Body of pancreas (tissue), 4 donors: ENCODE measurements at regions of chr6 and their contacts with region 1.

Region 1: DNA sequence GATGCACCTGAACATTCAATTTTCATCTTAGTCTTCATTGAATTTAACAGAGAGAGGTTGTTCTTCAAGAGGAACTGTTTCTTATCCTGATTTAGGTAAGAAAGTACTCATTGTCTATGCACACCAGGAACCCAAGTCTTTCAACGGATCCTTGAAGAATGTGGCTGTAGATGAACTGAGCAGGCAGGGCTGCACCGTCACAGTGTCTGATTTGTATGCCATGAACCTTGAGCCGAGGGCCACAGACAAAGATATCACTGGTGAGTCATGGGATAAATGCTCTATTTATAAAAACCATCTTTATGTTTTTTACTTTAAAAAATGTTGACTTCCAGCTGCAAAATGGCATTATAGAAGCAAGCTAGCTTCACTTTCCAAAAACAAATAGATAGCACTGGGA is 10.2 kb downstream of the NQO2 start:
- DNase-seq: no peak
- ATAC-seq: no peak
- H3K4me3 ChIP-seq: no peak overlapping the region
- H3K27ac ChIP-seq: no peak overlapping the region
- H3K4me1 ChIP-seq: no peaks in the 10 kb centered on the region
- H3K27me3 ChIP-seq: no peaks in the 10 kb centered on the region
- CTCF ChIP-seq: no peak
- POLR2A ChIP-seq: no peak

Region 2: DNA sequence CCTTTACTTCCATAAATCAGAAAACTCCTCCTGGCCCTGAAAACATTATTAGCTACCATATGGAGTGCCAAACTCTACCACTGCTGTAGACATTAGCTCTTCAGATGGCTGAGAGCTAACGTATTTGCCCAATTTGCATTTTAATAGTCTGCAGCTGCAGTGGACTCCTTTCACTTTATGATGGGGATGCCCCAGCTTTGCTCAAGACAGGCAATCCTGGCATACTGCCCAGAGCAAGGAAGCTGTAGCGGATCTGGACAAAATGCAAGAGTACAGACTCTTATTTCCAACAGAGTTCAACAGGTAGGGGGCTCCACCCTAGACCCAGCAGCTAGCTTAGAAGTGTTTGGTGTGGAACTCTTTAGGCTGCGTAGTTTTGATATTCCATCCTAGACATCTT is 1153.5 kb before region 1 on chr6:
- intact Hi-C with region 1: no loop called
- DNase-seq: no peak
- ATAC-seq: no peak
- H3K4me3 ChIP-seq: no peak overlapping the region
- H3K27ac ChIP-seq: no peak overlapping the region
- H3K4me1 ChIP-seq: no peaks in the 10 kb centered on the region
- H3K27me3 ChIP-seq: no peaks in the 10 kb centered on the region
- CTCF ChIP-seq: no peak
- POLR2A ChIP-seq: no peak

Region 3: DNA sequence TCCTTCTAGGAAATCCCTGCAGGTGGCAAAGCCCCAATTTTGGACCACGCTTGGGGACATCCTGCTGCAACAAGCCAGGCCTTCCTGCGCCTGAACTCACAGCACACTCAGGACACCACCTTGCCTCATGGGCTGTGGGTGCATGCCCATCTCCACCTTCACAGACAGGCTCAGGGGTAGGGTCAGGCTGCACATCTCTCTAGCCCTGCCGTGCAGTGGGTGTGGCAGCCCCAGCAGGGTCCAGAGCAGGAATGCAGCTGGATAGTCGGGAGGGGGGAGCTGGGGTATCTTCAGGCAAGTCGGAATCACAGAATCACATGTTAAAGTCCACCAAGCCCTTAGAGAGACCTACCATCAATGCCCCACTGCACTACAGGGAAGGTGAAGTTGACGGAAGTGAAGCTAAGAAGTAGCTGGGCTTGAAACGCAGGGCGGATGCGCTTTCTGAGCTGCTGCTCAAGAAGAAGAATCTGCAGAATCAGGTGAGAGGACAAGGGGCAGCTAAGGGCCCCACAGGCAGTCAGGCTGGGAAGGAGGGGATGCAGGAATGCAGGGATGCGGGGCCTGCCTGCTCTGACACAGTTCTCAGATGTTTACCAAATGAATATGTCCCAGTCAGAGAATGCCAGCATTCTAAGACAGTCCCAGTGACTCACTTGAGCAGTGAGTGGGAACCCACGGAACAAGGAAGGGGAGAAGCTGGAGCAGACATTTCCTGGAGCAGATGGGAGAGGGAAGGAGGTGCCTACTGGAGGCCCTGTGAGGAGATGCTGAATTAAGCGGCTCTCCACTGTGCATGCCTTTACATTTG is 49.8 kb before region 1 on chr6:
- intact Hi-C with region 1: no loop called
- DNase-seq: peak in 2 of 4 donors; percentile 29 to 38
- ATAC-seq: no peak
- H3K4me3 ChIP-seq: no peak overlapping the region
- H3K27ac ChIP-seq: peak overlapping the region in 3 of 4 donors; percentile 83 to 90 (median 88)
- H3K4me1 ChIP-seq: peaks cover 67% of the 10 kb centered on the region
- H3K27me3 ChIP-seq: no peaks in the 10 kb centered on the region
- CTCF ChIP-seq: no peak
- POLR2A ChIP-seq: no peak

Region 4: GRCh38 chr6:3052481-3053230 is 42.7 kb after region 1 on chr6:
- intact Hi-C with region 1: loop called (anchors 5 kb)
- DNase-seq: no peak
- ATAC-seq: no peak
- H3K4me3 ChIP-seq: no peak overlapping the region
- H3K27ac ChIP-seq: no peak overlapping the region
- H3K4me1 ChIP-seq: peaks cover 14% of the 10 kb centered on the region
- H3K27me3 ChIP-seq: no peaks in the 10 kb centered on the region
- CTCF ChIP-seq: no peak
- POLR2A ChIP-seq: no peak